MCF 10A (cell line): ENCODE measurements at regions of chr17 and their contacts with region 1.

Region 1: DNA sequence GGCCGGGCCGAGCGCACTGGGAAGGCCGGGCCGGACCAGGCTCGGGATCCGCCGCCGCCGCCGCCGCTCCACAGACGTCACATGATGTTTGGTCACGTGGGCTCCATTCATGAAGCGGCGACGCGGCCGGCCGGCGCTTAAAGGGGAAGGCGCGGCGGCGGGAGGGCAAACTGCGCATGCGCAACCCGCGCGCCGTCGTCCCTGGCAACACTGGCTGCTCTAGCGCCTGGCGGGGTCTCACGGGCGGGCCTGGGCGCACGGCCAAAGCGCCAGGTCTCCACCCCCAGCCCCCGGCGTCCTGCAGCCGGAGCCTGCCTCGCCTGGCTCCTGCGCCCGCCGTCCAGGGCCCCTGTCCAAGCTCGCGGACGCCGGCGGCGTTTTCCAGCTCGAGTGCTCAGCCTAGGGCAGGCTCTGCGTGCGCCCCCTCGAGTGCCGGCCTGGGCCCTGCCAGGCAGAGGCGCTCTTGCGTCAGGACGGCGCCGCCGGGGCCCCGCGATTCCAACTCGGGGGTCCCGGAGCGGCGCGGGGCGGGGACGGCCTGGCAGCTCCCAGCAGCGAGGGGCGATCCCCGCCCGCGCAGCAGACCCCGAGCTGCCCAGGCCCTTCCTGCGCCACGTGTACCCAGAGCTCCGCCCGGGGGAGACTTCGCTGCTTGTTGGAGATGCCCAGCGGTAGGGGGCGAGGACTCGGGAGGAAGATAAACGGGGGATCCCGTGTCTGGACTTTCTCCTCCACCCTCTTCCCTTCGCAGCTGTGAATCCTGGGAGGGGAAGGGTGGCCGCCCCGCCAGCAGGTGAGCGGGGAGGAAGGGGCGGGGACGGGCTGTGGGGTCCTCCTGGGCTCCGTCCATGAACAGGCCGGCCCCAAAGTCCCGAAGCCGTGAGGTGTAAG is at the start of gene MAFG:
- DNase-seq: peak; percentile 93
- H3K4me3 Mint-ChIP-seq: peak within 1 kb of the TSS; percentile 84
- H3K27ac Mint-ChIP-seq: peak within 1 kb of the TSS; percentile 81
- H3K4me1 Mint-ChIP-seq: peaks cover 19% of the 10 kb centered on the region
- H3K27me3 Mint-ChIP-seq: no peaks in the 10 kb centered on the region
- CTCF ChIP-seq: peak; percentile 26
- total RNA-seq, gene MAFG: 38.1 and 48.9 TPM in 2 replicates

Region 2: DNA sequence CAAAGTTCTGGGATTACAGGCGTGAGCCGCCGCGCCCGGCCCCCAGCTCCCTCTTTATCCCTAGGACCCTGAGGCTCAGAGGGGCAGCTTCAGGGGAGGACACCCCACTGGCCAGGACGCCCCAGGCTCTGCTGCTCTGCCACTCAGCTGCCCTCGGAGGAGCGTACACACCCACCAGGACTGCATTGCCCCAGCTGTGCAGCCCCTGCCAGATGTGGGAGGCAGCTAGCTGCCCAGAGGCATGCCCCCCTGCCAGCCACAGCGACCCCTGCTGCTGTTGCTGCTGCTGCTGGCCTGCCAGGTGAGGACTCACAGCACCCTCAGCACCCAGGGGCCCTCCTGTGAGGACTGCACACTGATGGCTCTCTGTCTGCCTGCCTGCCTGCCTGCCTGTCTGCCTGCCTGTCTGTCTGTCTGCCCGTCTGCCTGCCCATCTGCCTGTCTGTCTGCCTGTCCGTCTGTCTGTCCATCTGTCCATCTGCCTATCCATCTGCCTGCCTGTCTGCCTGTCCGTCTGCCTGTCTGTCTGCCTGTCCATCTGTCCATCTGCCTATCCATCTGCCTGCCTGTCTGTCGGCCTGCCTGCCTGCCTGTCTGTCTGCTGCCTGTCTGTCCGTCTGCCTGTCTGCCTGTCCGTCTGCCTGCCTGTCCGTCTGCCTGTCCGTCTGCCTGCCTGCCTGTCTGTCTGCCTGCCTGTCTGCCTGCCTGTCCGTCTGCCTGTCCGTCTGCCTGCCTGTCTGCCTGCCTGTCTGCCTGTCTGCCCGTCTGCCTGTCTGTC is 118.9 kb before region 1 on chr17:
- CTCF ChIA-PET with region 1: no interaction called
- POLR2A ChIA-PET with region 1: no interaction called
- intact Hi-C with region 1: no loop called
- DNase-seq: no peak
- H3K4me3 Mint-ChIP-seq: no peak overlapping the region
- H3K27ac Mint-ChIP-seq: no peak overlapping the region
- H3K4me1 Mint-ChIP-seq: peaks cover 9% of the 10 kb centered on the region
- H3K27me3 Mint-ChIP-seq: peaks cover 60% of the 10 kb centered on the region
- CTCF ChIP-seq: no peak

Region 3: DNA sequence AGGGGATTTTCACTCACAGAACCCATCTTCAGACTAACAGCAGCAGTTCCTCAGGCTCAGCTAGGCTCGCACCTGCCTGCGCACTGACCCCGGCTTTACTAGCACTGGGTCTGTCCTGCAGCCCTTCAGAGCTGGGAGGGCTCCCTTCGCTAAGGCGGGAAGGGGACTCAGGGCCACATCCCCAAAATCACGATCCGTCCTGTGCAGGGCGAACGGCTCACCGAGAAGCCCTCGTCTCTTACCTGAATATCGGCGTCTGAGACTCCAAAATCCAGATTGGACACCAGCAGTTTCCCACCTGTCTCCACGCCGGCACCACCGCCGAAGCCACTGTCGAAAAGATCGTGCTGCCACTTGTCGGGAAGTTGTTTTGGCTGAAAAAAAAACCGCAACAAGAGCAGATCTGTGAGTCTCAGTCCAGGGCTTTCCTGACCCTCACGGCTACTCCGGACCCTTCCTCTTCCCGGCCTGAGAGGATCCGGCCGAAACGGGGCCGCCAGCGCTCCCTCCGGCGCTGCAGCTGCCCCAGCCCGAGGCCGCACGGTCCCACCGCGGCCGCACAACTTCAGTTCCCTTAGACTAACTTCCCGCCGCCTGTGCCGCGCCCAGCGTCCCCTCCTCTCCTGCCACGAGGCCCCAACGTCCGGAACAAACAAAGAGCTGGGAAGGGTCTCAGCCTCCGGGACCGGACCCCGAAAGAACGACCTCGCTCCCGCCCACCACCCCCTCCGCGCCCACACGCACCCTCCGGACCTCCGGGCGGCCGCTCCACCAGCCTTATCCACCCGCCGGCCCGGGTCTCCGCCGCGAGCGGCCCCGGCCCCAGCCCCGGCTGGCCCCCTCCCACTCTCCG is 37.2 kb before region 1 on chr17:
- CTCF ChIA-PET with region 1: no interaction called
- POLR2A ChIA-PET with region 1: interaction called, 12 read pairs
- intact Hi-C with region 1: no loop called
- DNase-seq: no peak
- H3K4me3 Mint-ChIP-seq: peak overlapping the region; percentile 91
- H3K27ac Mint-ChIP-seq: peak overlapping the region; percentile 96
- H3K4me1 Mint-ChIP-seq: peaks cover 22% of the 10 kb centered on the region
- H3K27me3 Mint-ChIP-seq: no peaks in the 10 kb centered on the region
- CTCF ChIP-seq: no peak

Region 4: GRCh38 chr17:81911277-81911961 is 16.5 kb before region 1 on chr17 and contains the start of gene PCYT2:
- CTCF ChIA-PET with region 1: interaction called, 7 read pairs
- POLR2A ChIA-PET with region 1: interaction called, 59 read pairs
- intact Hi-C with region 1: no loop called
- DNase-seq: peak; percentile 89
- H3K4me3 Mint-ChIP-seq: peak within 1 kb of the TSS; percentile 72
- H3K27ac Mint-ChIP-seq: no peak within 1 kb of the TSS
- H3K4me1 Mint-ChIP-seq: peaks cover 27% of the 10 kb centered on the region
- H3K27me3 Mint-ChIP-seq: no peaks in the 10 kb centered on the region
- CTCF ChIP-seq: no peak
- total RNA-seq, gene PCYT2: 26.5 and 26.8 TPM in 2 replicates

Region 5: DNA sequence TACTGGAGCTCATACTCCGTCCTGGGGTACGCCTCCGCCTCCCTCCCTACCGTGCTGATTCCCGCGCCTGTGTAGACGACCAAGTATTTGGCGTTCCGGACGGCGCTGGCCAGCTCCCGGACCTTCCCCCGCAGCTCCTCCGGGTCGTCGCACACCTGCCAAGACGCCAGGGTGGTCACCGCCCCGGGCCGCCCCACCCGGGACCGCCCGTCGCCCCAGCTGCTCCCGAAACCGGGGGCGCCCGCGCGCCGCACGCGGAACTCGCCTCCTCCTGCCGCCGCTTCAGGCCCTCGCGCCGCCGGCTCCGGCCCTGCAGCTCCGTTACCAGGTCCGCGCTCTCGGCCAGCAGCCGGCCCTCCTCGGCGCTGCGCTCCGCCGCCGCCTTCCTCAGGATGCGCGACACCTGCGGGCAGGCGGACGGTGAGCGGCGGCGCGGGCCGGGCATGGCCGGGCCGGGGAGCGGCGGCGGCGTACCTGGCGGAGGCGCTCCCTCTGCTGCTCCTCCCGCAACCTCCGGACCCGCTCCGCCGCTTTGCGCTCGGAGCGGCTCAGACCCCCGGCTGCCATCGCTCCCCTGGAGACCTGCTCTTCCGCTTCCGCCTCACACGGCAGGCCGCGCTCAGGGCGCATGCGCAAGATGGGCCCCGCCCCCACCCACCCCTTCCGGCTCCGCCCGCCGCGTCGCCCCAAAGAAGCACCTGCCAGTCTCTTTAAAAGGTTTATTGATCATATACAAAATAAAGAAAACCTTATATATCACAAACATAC is 10.1 kb before region 1 on chr17 and contains the start of gene SIRT7:
- CTCF ChIA-PET with region 1: interaction called, 7 read pairs
- POLR2A ChIA-PET with region 1: interaction called, 59 read pairs
- intact Hi-C with region 1: no loop called
- DNase-seq: peak; percentile 75
- H3K4me3 Mint-ChIP-seq: peak within 1 kb of the TSS; percentile 87
- H3K27ac Mint-ChIP-seq: peak within 1 kb of the TSS; percentile 87
- H3K4me1 Mint-ChIP-seq: peaks cover 27% of the 10 kb centered on the region
- H3K27me3 Mint-ChIP-seq: no peaks in the 10 kb centered on the region
- CTCF ChIP-seq: no peak
- total RNA-seq, gene SIRT7: 36.6 and 44.8 TPM in 2 replicates

Region 6: GRCh38 chr17:81984773-81985410 is 57.0 kb after region 1 on chr17:
- CTCF ChIA-PET with region 1: no interaction called
- POLR2A ChIA-PET with region 1: no interaction called
- intact Hi-C with region 1: no loop called
- DNase-seq: no peak
- H3K4me3 Mint-ChIP-seq: no peak overlapping the region
- H3K27ac Mint-ChIP-seq: no peak overlapping the region
- H3K4me1 Mint-ChIP-seq: peaks cover 18% of the 10 kb centered on the region
- H3K27me3 Mint-ChIP-seq: no peaks in the 10 kb centered on the region
- CTCF ChIP-seq: no peak